ENCODE measurements at regions of chr19 and their contacts with region 1.

Region 1: DNA sequence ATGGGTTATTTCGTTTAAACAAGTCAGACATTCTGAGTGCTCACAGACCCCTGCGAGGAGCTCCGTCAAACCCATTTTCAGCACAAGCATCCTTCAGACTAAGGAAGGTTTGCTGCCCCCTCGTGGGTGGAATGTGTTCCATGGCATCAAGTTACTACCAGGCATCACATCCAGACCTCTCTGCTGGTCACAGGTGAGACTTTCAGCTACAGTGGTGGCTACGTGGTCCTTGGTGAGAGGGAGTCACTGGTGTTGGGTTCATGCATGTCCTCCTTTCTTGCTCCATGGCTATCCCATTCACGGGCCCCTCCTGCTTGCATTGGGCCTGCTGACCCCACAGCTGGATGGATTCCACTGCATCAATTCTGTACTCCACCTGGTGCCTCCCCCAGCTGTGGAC is 9.1 kb upstream of the LILRB5 start:
- DNase-seq: peak; percentile 60
- ATAC-seq: peak; percentile 71
- H3K4me3 Mint-ChIP-seq: no peak overlapping the region
- H3K27ac Mint-ChIP-seq: no peak overlapping the region
- H3K4me1 Mint-ChIP-seq: peaks cover 3% of the 10 kb centered on the region
- H3K27me3 Mint-ChIP-seq: peaks cover 19% of the 10 kb centered on the region
- CTCF ChIP-seq: no peak

Region 2: GRCh38 chr19:54128796-54129616 is 137.1 kb before region 1 on chr19:
- CTCF ChIA-PET with region 1: no interaction called
- POLR2A ChIA-PET with region 1: no interaction called
- intact Hi-C with region 1: no loop called
- DNase-seq: no peak
- ATAC-seq: no peak
- H3K4me3 Mint-ChIP-seq: no peak overlapping the region
- H3K27ac Mint-ChIP-seq: no peak overlapping the region
- H3K4me1 Mint-ChIP-seq: no peaks in the 10 kb centered on the region
- H3K27me3 Mint-ChIP-seq: no peaks in the 10 kb centered on the region
- CTCF ChIP-seq: no peak

Region 3: GRCh38 chr19:54168174-54168917 is 97.8 kb before region 1 on chr19:
- CTCF ChIA-PET with region 1: interaction called, 5 read pairs
- POLR2A ChIA-PET with region 1: no interaction called
- intact Hi-C with region 1: loop called (anchors 1 kb)
- DNase-seq: peak; percentile 85
- ATAC-seq: peak; percentile 89
- H3K4me3 Mint-ChIP-seq: no peak overlapping the region
- H3K27ac Mint-ChIP-seq: no peak overlapping the region
- H3K4me1 Mint-ChIP-seq: peaks cover 24% of the 10 kb centered on the region
- H3K27me3 Mint-ChIP-seq: peaks cover 17% of the 10 kb centered on the region
- CTCF ChIP-seq: peak; percentile 71

Region 4: GRCh38 chr19:54281007-54281728 is 15.0 kb after region 1 on chr19 and contains the start of gene LILRB2:
- CTCF ChIA-PET with region 1: interaction called, 40 read pairs
- POLR2A ChIA-PET with region 1: interaction called, 3 read pairs
- intact Hi-C with region 1: loop called (anchors 2 kb)
- DNase-seq: no peak
- ATAC-seq: no peak
- H3K4me3 Mint-ChIP-seq: peak within 1 kb of the TSS; percentile 79
- H3K27ac Mint-ChIP-seq: peak within 1 kb of the TSS; percentile 67
- H3K4me1 Mint-ChIP-seq: peaks cover 68% of the 10 kb centered on the region
- H3K27me3 Mint-ChIP-seq: peaks cover 7% of the 10 kb centered on the region
- CTCF ChIP-seq: no peak
- total RNA-seq, gene LILRB2: 7.6 and 7.9 TPM in 2 replicates

Region 5: GRCh38 chr19:54297760-54298305 is 31.7 kb after region 1 on chr19:
- CTCF ChIA-PET with region 1: interaction called, 23 read pairs
- POLR2A ChIA-PET with region 1: no interaction called
- intact Hi-C with region 1: loop called (anchors 2 kb)
- DNase-seq: no peak
- ATAC-seq: peak; percentile 68
- H3K4me3 Mint-ChIP-seq: no peak overlapping the region
- H3K27ac Mint-ChIP-seq: no peak overlapping the region
- H3K4me1 Mint-ChIP-seq: peaks cover 11% of the 10 kb centered on the region
- H3K27me3 Mint-ChIP-seq: peaks cover 46% of the 10 kb centered on the region
- CTCF ChIP-seq: no peak

Region 6: GRCh38 chr19:54316746-54317107 is 50.6 kb after region 1 on chr19:
- CTCF ChIA-PET with region 1: interaction called, 11 read pairs
- POLR2A ChIA-PET with region 1: no interaction called
- intact Hi-C with region 1: no loop called
- DNase-seq: no peak
- ATAC-seq: no peak
- H3K4me3 Mint-ChIP-seq: no peak overlapping the region
- H3K27ac Mint-ChIP-seq: no peak overlapping the region
- H3K4me1 Mint-ChIP-seq: peaks cover 52% of the 10 kb centered on the region
- H3K27me3 Mint-ChIP-seq: peaks cover 13% of the 10 kb centered on the region
- CTCF ChIP-seq: no peak

Region 7: GRCh38 chr19:54325194-54325621 is 59.1 kb after region 1 on chr19:
- CTCF ChIA-PET with region 1: interaction called, 13 read pairs
- POLR2A ChIA-PET with region 1: no interaction called
- intact Hi-C with region 1: no loop called
- DNase-seq: no peak
- ATAC-seq: peak; percentile 69
- H3K4me3 Mint-ChIP-seq: peak overlapping the region; percentile 32
- H3K27ac Mint-ChIP-seq: peak overlapping the region; percentile 56
- H3K4me1 Mint-ChIP-seq: peaks cover 54% of the 10 kb centered on the region
- H3K27me3 Mint-ChIP-seq: no peaks in the 10 kb centered on the region
- CTCF ChIP-seq: peak; percentile 84

Region 8: GRCh38 chr19:54352041-54352440 is 85.9 kb after region 1 on chr19:
- CTCF ChIA-PET with region 1: interaction called, 12 read pairs
- POLR2A ChIA-PET with region 1: no interaction called
- intact Hi-C with region 1: loop called (anchors 1 kb)
- DNase-seq: no peak
- ATAC-seq: peak; percentile 78
- H3K4me3 Mint-ChIP-seq: peak overlapping the region; percentile 36
- H3K27ac Mint-ChIP-seq: peak overlapping the region; percentile 83
- H3K4me1 Mint-ChIP-seq: peaks cover 62% of the 10 kb centered on the region
- H3K27me3 Mint-ChIP-seq: peaks cover 4% of the 10 kb centered on the region
- CTCF ChIP-seq: no peak

Region 9: GRCh38 chr19:54573330-54573872 is 307.3 kb after region 1 on chr19 and contains the start of gene LILRA2:
- CTCF ChIA-PET with region 1: no interaction called
- POLR2A ChIA-PET with region 1: no interaction called
- intact Hi-C with region 1: no loop called
- DNase-seq: no peak
- ATAC-seq: peak; percentile 58
- H3K4me3 Mint-ChIP-seq: peak within 1 kb of the TSS; percentile 58
- H3K27ac Mint-ChIP-seq: peak within 1 kb of the TSS; percentile 62
- H3K4me1 Mint-ChIP-seq: peaks cover 29% of the 10 kb centered on the region
- H3K27me3 Mint-ChIP-seq: peaks cover 5% of the 10 kb centered on the region
- CTCF ChIP-seq: no peak
- total RNA-seq, gene LILRA2: 0.22 TPM in 1 of 2 replicates, not detected in the other